Activated T-helper 1 cell treated with anti-CD3 and anti-CD28 coated beads, Interleukin-12 subunit alpha, Interleukin-12 subunit beta, Interleukin-2, Interleukin-4 antibody, amounts not matched to agents 30 ng/mL and 10 ng/mL and 1 ng/mL, durations not matched to agents 14 hours and 24 hours and 36 hours (primary cell): ENCODE measurements at regions of chr17 and their contacts with region 1.

Region 1: DNA sequence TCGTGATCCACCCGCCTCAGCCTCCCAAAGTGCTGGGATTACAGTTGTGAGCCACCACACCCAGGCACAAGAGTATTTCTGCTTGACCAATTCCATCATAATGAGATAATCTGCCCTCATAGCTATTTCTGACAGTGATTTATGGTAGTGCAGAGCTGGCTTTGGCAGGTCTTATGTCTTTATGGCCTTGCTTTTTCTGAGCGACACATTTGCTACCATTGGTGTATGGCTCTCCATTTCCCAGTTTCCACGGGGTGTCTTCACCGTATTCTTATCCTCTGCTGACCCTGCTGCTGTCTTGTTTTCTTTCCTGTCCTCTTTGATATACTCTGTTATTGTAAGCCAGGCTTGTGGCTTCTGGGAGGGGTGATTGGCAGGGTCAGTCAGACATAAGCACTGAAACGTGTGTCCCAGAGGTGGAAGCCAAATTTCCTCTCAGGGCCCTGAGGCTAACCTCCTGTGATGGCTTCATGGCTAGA is 161.1 kb upstream of the TBX2 start:
- DNase-seq: no peak
- H3K4me3 Mint-ChIP-seq: no peak overlapping the region
- H3K27ac Mint-ChIP-seq: peak overlapping the region; percentile 1
- H3K4me1 Mint-ChIP-seq: peaks cover 34% of the 10 kb centered on the region
- H3K27me3 Mint-ChIP-seq: no peaks in the 10 kb centered on the region

Region 2: DNA sequence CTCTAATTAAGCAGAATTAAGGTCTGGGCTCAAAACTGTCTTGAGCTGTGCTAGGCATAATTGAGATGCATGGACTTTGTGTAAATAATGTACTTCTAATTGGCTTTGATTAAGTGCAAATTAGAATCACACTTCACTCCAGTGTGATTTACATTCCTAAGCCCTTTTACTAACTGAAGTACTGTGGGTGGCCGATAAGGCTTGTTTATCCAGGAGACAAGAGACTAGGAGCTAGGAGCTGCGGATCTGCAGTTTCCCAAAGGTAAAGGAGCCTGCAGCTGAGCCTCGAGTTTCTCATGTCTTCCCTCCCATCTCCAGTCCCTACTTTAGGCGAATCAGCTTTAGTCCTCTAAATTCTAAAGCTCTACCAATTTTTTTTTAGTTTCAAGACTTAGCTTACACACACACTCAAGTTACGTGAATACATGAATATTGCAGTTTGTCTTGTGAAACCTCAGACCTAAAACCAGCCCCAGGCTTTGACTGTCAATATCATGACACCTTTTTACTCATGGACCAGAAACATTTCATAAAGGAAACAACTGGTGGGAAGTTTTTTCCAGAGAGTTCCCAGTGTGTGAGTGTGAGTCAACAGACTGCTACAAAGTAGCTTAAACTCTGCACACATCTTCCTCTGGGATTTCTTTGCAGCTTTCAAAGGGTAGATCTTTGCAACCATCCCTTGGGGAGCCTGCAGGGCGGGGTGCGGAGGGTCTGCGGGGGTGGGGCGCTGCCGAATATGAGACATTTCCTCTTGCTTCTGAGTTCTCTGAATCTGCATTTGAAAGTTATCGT is 47.2 kb after region 1 on chr17:
- intact Hi-C with region 1: loop called (anchors 2 kb)
- DNase-seq: no peak
- H3K4me3 Mint-ChIP-seq: no peak overlapping the region
- H3K27ac Mint-ChIP-seq: peak overlapping the region; percentile 51
- H3K4me1 Mint-ChIP-seq: peaks cover 32% of the 10 kb centered on the region
- H3K27me3 Mint-ChIP-seq: no peaks in the 10 kb centered on the region